Body of pancreas (tissue), 4 donors: ENCODE measurements at regions of chr15 and their contacts with region 1.

Region 1: GRCh38 chr15:69583626-69584025 is 131.0 kb downstream of the RPLP1 start:
- DNase-seq: no peak
- ATAC-seq: no peak
- H3K4me3 ChIP-seq: no peak overlapping the region
- H3K27ac ChIP-seq: no peak overlapping the region
- H3K4me1 ChIP-seq: peaks cover 25% of the 10 kb centered on the region
- H3K27me3 ChIP-seq: no peaks in the 10 kb centered on the region
- CTCF ChIP-seq: no peak
- POLR2A ChIP-seq: no peak

Region 2: GRCh38 chr15:69280783-69281182 is 302.8 kb before region 1 on chr15:
- intact Hi-C with region 1: no loop called
- DNase-seq: no peak
- ATAC-seq: no peak
- H3K4me3 ChIP-seq: no peak overlapping the region
- H3K27ac ChIP-seq: no peak overlapping the region
- H3K4me1 ChIP-seq: peaks cover 7% of the 10 kb centered on the region
- H3K27me3 ChIP-seq: no peaks in the 10 kb centered on the region
- CTCF ChIP-seq: no peak
- POLR2A ChIP-seq: no peak

Region 3: DNA sequence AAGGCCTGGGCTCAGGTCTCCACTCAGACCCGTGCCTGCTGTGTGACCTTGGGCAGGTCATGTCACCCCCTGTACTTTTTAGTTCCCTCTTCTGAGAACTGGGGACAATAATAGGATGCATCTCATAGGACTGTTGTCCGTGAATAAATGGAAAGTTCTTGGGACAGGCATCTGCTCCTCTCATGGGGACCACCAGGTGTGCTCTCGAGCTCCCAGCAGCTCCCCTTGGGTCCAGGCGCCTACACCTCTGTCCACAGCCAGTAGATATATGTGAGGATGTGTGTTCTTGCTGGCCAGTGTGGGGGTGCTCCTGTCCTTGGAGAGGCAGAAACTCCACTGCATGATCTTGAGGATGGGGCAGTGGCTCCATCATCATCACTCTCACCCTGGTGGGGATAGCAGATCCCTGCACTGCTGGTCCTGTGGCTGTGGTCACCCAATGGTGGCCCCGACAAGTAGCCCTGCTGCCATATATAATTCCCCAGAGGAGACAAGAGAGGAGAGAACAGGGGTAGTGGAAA is 771.7 kb after region 1 on chr15:
- intact Hi-C with region 1: loop called (anchors 10 kb)
- DNase-seq: no peak
- ATAC-seq: no peak
- H3K4me3 ChIP-seq: no peak overlapping the region
- H3K27ac ChIP-seq: no peak overlapping the region
- H3K4me1 ChIP-seq: peaks cover 9% of the 10 kb centered on the region
- H3K27me3 ChIP-seq: no peaks in the 10 kb centered on the region
- CTCF ChIP-seq: no peak
- POLR2A ChIP-seq: no peak